ENCODE measurements at regions of chr1 and their contacts with region 1.

Region 1: DNA sequence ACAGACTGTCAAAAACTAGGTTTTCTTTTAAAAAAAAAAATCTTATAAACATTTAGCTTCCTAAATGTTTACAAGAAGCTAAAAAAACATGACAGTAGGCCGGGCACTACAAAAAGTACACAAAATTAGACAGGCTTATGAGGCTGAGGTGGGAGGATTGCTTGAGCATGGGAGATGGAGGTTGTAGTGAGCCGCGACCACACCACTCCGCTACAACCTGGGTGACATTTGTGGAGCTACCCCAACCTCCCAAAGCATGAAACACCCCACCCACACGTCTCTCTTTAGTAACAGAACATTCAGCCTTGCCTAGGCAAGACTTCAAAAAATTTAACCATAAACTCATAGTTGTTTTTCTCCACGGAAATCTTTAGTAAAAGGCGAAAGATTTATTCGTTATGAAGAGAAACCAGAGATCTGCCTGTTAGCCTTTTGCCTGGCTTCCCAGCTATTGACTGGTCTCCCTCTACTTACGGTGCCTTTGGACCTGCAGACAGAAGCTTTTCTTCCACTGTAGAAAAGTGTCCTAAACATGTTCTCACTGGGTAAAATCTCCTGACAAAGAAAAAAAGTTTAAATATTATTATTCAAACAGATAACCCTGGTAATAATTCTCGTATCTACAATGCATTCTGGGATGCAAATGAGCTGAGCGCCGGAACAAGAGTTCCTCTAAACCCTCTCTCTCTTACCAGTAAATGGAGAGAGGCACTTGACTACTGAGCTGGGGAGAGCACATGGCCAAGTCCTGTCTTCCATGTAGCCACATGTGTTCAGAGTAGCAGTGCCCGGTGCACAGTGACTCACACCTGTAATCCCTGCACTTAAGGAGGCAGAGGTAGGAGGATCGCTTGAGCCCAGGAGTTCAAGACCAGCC is 9.2 kb downstream of the RNU5D-1 start:
- DNase-seq: peak; percentile 87
- H3K4me3 Mint-ChIP-seq: peak overlapping the region; percentile 52
- H3K27ac Mint-ChIP-seq: peak overlapping the region; percentile 94
- H3K4me1 Mint-ChIP-seq: peaks cover 71% of the 10 kb centered on the region
- H3K27me3 Mint-ChIP-seq: no peaks in the 10 kb centered on the region

Region 2: DNA sequence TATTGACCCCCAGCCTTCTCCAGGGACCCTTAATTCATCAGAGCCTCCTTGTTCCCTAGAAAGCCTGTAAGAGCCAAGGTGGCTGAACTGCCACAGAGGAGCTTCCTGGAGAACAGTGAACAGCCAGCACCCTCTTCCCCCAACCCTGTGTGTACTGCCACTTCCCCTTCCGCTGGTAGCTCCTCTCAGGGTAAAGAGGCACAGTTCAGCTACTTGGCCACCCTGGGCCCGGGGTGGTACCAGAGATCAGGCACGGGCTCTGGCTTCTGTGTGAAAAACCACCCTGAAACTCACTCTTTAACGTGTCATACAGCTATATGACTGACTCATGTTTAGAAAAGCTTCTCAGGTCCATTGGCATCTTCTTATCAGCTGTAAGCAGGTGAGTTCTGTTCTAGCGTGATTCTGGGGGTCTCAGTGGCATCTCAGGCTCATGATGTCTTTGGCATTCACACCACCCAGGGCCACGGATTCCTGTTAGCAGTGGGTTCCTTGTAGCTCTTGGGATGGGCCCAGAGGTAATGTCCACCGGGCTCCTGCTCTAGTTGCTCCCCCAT is 24.9 kb before region 1 on chr1:
- CTCF ChIA-PET with region 1: interaction called, 6 read pairs
- POLR2A ChIA-PET with region 1: interaction called, 39 read pairs
- DNase-seq: peak; percentile 58
- H3K4me3 Mint-ChIP-seq: no peak overlapping the region
- H3K27ac Mint-ChIP-seq: peak overlapping the region; percentile 83
- H3K4me1 Mint-ChIP-seq: peaks cover 21% of the 10 kb centered on the region
- H3K27me3 Mint-ChIP-seq: no peaks in the 10 kb centered on the region

Region 3: DNA sequence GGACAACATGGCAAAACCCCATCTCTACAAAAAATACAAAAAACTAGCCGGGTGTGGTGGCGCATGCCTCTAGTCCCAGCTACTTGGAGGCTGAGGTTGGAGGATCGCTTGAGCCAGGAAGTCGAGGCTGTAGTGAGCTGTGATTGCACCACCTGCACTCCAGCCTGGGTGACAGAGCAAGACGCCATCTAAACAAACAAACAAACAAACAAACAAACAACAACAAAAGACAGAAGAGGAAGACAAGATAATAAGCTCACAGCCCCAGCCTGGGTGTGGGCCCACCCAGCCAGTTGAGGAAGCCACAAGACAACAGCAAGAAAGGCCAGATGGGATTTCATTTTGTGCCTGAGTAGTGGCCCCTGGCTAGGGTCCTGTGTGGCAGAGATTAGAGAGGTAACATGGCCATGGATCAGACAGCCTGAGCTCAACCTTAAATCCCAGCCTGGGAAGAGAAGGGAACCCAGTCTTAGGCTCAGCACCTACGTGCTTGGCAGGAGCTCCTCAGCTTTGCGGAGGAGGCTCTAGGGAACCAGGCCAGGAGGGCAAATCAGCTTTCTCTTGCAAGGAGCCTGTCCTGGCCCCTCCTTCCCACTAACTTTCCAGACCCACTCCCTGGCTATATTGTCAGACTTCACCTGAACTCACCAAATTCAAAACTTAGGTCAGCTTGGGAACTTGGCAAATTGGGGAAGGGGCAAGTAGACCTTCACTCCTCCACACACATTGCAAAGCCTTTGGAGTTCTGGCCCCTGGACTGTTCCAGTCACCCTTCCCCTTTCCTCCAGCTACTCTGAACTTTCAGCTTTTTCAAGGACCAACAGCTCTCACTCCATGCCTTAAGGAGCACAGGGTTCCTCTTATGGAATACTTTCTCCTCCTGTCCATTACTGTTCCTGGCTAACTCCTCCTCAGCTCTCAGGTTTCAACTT is 71.3 kb after region 1 on chr1:
- CTCF ChIA-PET with region 1: interaction called, 3 read pairs
- POLR2A ChIA-PET with region 1: interaction called, 454 read pairs
- DNase-seq: no peak
- H3K4me3 Mint-ChIP-seq: no peak overlapping the region
- H3K27ac Mint-ChIP-seq: no peak overlapping the region
- H3K4me1 Mint-ChIP-seq: peaks cover 2% of the 10 kb centered on the region
- H3K27me3 Mint-ChIP-seq: no peaks in the 10 kb centered on the region

Region 4: DNA sequence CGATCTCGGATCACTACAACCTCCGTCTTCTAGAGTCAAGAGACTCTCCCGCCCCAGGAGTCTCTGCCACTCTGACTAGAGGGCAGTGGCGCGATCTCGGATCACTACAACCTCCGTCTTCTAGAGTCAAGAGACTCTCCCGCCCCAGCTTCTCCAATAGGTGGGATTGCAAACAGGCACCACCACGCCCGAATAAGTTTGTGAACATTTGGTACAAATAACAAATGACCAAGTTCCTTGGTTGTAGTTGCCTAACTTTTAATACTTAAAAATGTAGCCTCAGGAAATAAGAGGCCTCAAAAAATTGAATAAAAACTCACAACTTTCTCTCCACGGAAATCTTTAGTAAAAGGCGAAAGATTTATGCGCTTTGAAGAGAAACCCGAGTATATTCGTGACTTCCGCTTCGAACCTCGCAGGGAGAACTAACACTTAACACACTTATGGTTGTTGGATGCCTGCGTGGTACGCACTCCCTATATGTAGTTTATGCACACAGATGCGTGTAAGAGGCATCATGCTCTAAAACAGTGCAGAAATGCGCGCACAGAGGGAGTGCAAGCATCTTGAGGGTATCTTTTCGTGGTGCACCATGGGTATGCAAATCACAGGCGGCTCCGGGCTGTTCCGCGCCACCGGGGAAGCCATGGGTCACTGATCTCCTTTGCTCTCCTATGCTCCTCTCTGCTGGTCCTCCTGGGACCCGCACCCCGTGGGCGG is 98.0 kb after region 1 on chr1:
- CTCF ChIA-PET with region 1: interaction called, 13 read pairs
- POLR2A ChIA-PET with region 1: interaction called, 330 read pairs
- DNase-seq: peak; percentile 87
- H3K4me3 Mint-ChIP-seq: peak overlapping the region; percentile 85
- H3K27ac Mint-ChIP-seq: peak overlapping the region; percentile 98
- H3K4me1 Mint-ChIP-seq: peaks cover 45% of the 10 kb centered on the region
- H3K27me3 Mint-ChIP-seq: no peaks in the 10 kb centered on the region

Region 5: GRCh38 chr1:45339789-45340570 is 618.3 kb after region 1 on chr1 and contains the starts of genes MUTYH and TOE1:
- CTCF ChIA-PET with region 1: no interaction called
- POLR2A ChIA-PET with region 1: interaction called, 48 read pairs
- DNase-seq: peak; percentile 96
- H3K4me3 Mint-ChIP-seq: peak within 1 kb of the TSS; percentile 96
- H3K27ac Mint-ChIP-seq: peak within 1 kb of the TSS; percentile 100
- H3K4me1 Mint-ChIP-seq: peaks cover 58% of the 10 kb centered on the region
- H3K27me3 Mint-ChIP-seq: no peaks in the 10 kb centered on the region
- total RNA-seq, gene MUTYH: 37.2 to 39.2 TPM
- total RNA-seq, gene TOE1: 16.6 to 18.3 TPM

Region 6: GRCh38 chr1:45686317-45687013 is 964.7 kb after region 1 on chr1 and contains the start of gene GPBP1L1:
- CTCF ChIA-PET with region 1: no interaction called
- POLR2A ChIA-PET with region 1: interaction called, 13 read pairs
- DNase-seq: peak; percentile 98
- H3K4me3 Mint-ChIP-seq: peak within 1 kb of the TSS; percentile 100
- H3K27ac Mint-ChIP-seq: peak within 1 kb of the TSS; percentile 100
- H3K4me1 Mint-ChIP-seq: peaks cover 55% of the 10 kb centered on the region
- H3K27me3 Mint-ChIP-seq: no peaks in the 10 kb centered on the region
- total RNA-seq, gene GPBP1L1: 130 to 134 TPM

Measured in activated CD4-positive, alpha-beta memory T cell treated with anti-CD3 and anti-CD28 coated beads, Interleukin-2, amount 10 ng/mL, durations not matched to agents 7 days and 5 days (primary cell).